GM10248 (cell line): ENCODE measurements at regions of chr13 and their contacts with region 1.

Region 1: DNA sequence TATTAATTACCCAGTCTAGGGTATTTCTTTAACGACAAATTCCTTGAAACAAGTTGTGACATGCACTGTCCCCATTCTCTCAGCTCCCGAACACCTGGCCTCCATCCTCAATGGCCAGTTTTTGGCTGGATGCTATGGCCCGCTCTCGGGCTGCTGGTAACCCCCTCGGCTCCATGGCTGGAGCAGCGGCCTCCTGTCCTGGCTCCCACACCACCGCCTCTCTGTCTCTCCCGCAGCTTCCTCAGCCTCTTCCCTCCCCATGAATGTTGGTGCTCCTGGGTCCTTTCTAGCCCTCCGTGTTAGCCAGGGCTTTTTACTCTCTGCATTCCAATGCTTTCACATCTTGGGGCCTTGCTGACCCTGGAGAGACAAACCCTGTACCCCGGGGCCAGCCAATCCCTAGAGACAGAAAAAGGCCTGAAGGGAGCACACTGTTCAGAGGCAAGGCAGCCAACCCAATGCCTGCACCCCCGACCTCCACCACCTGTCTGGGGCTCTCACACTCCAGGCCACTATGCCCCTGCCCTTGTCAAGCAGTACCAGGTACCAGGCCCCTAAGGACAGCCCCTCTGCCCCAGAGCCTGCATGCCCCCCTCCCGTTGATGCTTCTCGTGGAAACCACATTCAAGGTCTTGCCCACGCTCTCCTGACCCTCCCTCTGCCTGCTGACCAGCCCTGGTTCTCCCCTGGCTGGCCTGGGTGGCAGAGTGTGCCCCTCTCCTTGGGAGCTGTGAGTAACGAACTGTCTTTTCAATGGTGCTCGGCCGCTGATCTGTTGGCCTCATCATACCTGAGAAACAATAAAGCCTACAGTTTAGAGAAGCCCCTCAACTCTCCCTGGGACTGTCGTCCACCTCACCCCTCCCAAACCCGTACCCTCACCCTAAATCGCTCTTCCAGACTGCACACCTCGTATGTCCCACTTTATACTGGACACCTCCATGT is 86.9 kb upstream of the GPR183 start:
- DNase-seq: no peak
- CTCF ChIP-seq: no peak

Region 2: GRCh38 chr13:99380921-99381645 is 13.0 kb before region 1 on chr13:
- CTCF ChIA-PET with region 1: interaction called, 21 read pairs
- POLR2A ChIA-PET with region 1: no interaction called
- DNase-seq: peak; percentile 74
- CTCF ChIP-seq: no peak